Naive thymus-derived CD4-positive, alpha-beta T cell (primary cell): ENCODE measurements at regions of chr5 and their contacts with region 1.

Region 1: DNA sequence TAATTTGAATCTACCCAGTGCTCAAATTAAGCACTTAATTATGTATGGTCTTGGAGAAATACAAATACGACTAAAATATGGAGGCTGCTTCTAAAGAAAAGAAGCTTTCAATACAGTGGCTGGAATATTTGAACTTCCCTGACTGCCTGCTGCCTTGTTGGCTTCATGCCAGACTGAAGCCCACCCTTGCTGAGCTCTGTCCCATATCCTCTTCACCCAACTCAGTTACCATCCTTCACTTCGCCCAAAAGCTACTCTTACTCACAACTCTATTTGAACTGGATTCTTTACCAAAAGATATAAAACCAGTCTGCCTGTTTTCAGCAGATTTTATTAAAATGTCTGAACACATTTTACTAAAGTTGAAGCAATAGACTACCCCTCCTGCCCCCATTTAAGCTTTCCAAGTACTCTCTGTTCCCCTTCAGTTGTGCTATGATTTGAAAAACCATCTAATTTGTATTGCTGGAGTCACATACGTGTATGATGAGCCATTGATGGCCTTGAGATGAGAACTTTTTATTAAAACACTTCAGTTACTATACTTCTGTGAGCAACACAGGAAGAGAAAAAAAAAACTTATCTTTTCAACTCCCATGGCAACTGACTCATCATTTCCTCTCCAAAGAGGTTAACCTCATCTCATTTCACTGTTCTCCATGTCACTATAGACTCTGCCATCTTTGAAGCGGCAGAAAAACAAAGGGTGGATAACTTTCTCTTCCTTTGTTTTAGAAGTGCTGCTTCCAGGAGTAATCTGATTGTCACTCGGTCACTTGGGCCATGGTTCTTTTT is 104.1 kb upstream of the PCSK1 start:
- DNase-seq: peak in 7 of 9 donors; percentile 54 to 79 (median 73)
- ATAC-seq: peak; percentile 97
- H3K4me3 ChIP-seq: peak overlapping the region; percentile 14
- H3K4me3 Mint-ChIP-seq: peak overlapping the region in 9 of 10 donors; percentile 26 to 76 (median 61)
- H3K27ac ChIP-seq: peak overlapping the region; percentile 41
- H3K27ac Mint-ChIP-seq: peak overlapping the region; percentile 82 to 94 (median 88)
- H3K4me1 ChIP-seq: peaks cover 20 to 23% of the 10 kb centered on the region in 2 donors
- H3K4me1 Mint-ChIP-seq: peaks cover 15 to 41% (median 32%) of the 10 kb centered on the region in 7 donors
- H3K27me3 ChIP-seq: no peaks in the 10 kb centered on the region
- H3K27me3 Mint-ChIP-seq: peaks cover 0 to 6% (median 0%) of the 10 kb centered on the region in 5 donors

Region 2: GRCh38 chr5:95822542-95823181 is 714.5 kb before region 1 on chr5 and contains the start of gene GLRX:
- CTCF ChIA-PET with region 1: no interaction called
- POLR2A ChIA-PET with region 1: interaction called, 3 read pairs
- intact Hi-C with region 1: loop called in 1 of 2 experiments (anchors 2 kb)
- DNase-seq: peak in 8 of 9 donors; percentile 48 to 62 (median 58)
- ATAC-seq: peak; percentile 52
- H3K4me3 ChIP-seq: peak within 1 kb of the TSS; percentile 93
- H3K4me3 Mint-ChIP-seq: peak within 1 kb of the TSS; percentile 91 to 100 (median 99)
- H3K27ac ChIP-seq: peak within 1 kb of the TSS; percentile 84
- H3K27ac Mint-ChIP-seq: peak within 1 kb of the TSS; percentile 91 to 97 (median 95)
- H3K4me1 ChIP-seq: peaks cover 38% of the 10 kb centered on the region in 2 donors
- H3K4me1 Mint-ChIP-seq: peaks cover 53 to 78% (median 61%) of the 10 kb centered on the region in 7 donors
- H3K27me3 ChIP-seq: no peaks in the 10 kb centered on the region
- H3K27me3 Mint-ChIP-seq: no peaks in the 10 kb centered on the region
- total RNA-seq, gene GLRX: 26.3 to 89.5 (median 55.6) TPM

Region 3: GRCh38 chr5:95870105-95870672 is 667.0 kb before region 1 on chr5:
- CTCF ChIA-PET with region 1: no interaction called
- POLR2A ChIA-PET with region 1: no interaction called
- intact Hi-C with region 1: loop called (anchors 2 to 5 kb)
- DNase-seq: peak in 1 of 9 donors; percentile 54
- ATAC-seq: peak; percentile 41
- H3K4me3 ChIP-seq: no peak overlapping the region
- H3K4me3 Mint-ChIP-seq: peak overlapping the region; percentile 14 to 83 (median 60)
- H3K27ac ChIP-seq: no peak overlapping the region
- H3K27ac Mint-ChIP-seq: peak overlapping the region; percentile 12 to 94 (median 59)
- H3K4me1 ChIP-seq: peaks cover 19 to 21% of the 10 kb centered on the region in 2 donors
- H3K4me1 Mint-ChIP-seq: peaks cover 26 to 41% (median 40%) of the 10 kb centered on the region in 7 donors
- H3K27me3 ChIP-seq: no peaks in the 10 kb centered on the region
- H3K27me3 Mint-ChIP-seq: no peaks in the 10 kb centered on the region

Region 4: DNA sequence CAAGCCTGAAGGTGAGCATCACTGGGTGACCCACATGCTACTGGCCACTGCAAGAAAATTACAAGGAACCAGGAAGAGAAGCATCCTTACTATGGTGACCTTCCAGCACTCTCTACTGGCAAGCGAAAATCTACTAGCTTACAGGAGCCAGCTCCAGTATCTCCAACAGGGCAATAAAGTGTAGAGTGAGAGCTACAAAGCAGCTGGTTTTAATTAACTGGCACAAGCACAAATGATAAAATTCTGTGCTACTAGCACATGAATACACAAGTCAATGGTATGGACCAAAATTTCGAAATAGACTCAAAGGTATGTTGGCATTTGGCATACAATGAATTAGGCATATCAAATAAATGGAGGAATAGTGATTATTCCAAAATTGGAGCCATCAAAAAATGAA is 11.8 kb after region 1 on chr5:
- CTCF ChIA-PET with region 1: no interaction called
- POLR2A ChIA-PET with region 1: no interaction called
- intact Hi-C with region 1: loop called in 1 of 2 experiments (anchors 1 kb)
- DNase-seq: no peak
- ATAC-seq: no peak
- H3K4me3 ChIP-seq: no peak overlapping the region
- H3K4me3 Mint-ChIP-seq: no peak overlapping the region
- H3K27ac ChIP-seq: no peak overlapping the region
- H3K27ac Mint-ChIP-seq: no peak overlapping the region
- H3K4me1 ChIP-seq: no peaks in the 10 kb centered on the region
- H3K4me1 Mint-ChIP-seq: peaks cover 0 to 2% (median 0%) of the 10 kb centered on the region in 7 donors
- H3K27me3 ChIP-seq: no peaks in the 10 kb centered on the region
- H3K27me3 Mint-ChIP-seq: peaks cover 0 to 29% (median 6%) of the 10 kb centered on the region in 5 donors

Region 5: DNA sequence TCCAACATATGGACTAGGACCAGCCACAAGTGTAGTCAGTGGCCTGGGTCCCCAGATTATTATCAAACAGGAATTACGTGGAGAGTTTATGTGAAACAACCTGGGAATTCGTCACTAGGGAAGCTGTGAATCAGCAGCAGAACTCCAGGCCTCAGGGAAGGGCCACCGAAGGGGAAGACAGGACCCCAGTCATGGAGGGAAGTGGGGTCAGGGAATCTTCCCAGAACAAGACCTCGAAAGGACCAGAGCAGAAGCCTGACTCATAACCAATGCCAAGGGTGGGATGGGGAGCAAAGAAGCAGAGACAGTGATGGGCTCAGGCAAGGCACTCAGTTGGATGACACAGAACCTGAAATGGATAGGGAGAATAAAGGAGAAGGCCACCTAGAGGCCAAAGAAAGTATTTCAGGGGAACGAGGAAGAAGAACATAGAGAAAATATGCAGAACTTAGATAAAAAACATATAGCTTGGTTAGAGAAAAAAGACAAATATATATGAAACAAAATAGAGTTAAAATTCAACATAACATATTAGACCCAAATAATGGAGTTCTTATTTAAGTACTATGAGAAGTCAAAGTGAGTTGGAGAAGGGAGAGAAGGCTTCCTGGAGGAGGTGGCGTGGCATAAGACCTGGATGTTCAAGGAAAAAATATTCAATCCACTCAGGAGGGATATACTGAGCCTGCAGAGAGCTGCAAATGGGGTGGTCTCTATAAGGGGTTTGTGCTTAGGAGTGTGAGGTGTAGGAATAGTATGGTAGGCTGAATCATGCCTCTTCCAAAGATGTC is 58.3 kb after region 1 on chr5:
- CTCF ChIA-PET with region 1: no interaction called
- POLR2A ChIA-PET with region 1: no interaction called
- intact Hi-C with region 1: loop called in 1 of 2 experiments (anchors 5 kb)
- DNase-seq: peak in 1 of 9 donors; percentile 18
- ATAC-seq: no peak
- H3K4me3 ChIP-seq: no peak overlapping the region
- H3K4me3 Mint-ChIP-seq: no peak overlapping the region
- H3K27ac ChIP-seq: no peak overlapping the region
- H3K27ac Mint-ChIP-seq: no peak overlapping the region
- H3K4me1 ChIP-seq: no peaks in the 10 kb centered on the region
- H3K4me1 Mint-ChIP-seq: peaks cover 0 to 3% (median 0%) of the 10 kb centered on the region in 7 donors
- H3K27me3 ChIP-seq: no peaks in the 10 kb centered on the region
- H3K27me3 Mint-ChIP-seq: peaks cover 0 to 29% (median 7%) of the 10 kb centered on the region in 5 donors

Region 6: GRCh38 chr5:97183100-97183929 is 646.1 kb after region 1 on chr5 and contains the start of gene RIOK2:
- CTCF ChIA-PET with region 1: no interaction called
- POLR2A ChIA-PET with region 1: no interaction called
- intact Hi-C with region 1: loop called in 1 of 2 experiments (anchors 1 kb)
- DNase-seq: peak; percentile 77 to 93 (median 91)
- ATAC-seq: peak; percentile 96
- H3K4me3 ChIP-seq: peak within 1 kb of the TSS; percentile 82
- H3K4me3 Mint-ChIP-seq: peak within 1 kb of the TSS; percentile 89 to 98 (median 94)
- H3K27ac ChIP-seq: peak within 1 kb of the TSS; percentile 94
- H3K27ac Mint-ChIP-seq: peak within 1 kb of the TSS; percentile 99 to 100 (median 100)
- H3K4me1 ChIP-seq: peaks cover 4 to 14% of the 10 kb centered on the region in 2 donors
- H3K4me1 Mint-ChIP-seq: peaks cover 23 to 54% (median 44%) of the 10 kb centered on the region in 7 donors
- H3K27me3 ChIP-seq: no peaks in the 10 kb centered on the region
- H3K27me3 Mint-ChIP-seq: peaks cover 0 to 3% (median 0%) of the 10 kb centered on the region in 5 donors
- total RNA-seq, gene RIOK2: 18.8 to 36.0 (median 28.5) TPM